Naive thymus-derived CD4-positive, alpha-beta T cell (primary cell): ENCODE measurements at regions of chr3 and their contacts with region 1.

Region 1: GRCh38 chr3:99817437-99818240 is at the start of gene CMSS1:
- DNase-seq: peak; percentile 96 to 98 (median 97)
- ATAC-seq: peak; percentile 94
- H3K4me3 ChIP-seq: peak within 1 kb of the TSS; percentile 80
- H3K4me3 Mint-ChIP-seq: peak within 1 kb of the TSS; percentile 84 to 99 (median 95)
- H3K27ac ChIP-seq: peak within 1 kb of the TSS; percentile 90
- H3K27ac Mint-ChIP-seq: peak within 1 kb of the TSS; percentile 93 to 100 (median 100)
- H3K4me1 ChIP-seq: peaks cover 18 to 22% of the 10 kb centered on the region in 2 donors
- H3K4me1 Mint-ChIP-seq: peaks cover 19 to 62% (median 41%) of the 10 kb centered on the region in 7 donors
- H3K27me3 ChIP-seq: no peaks in the 10 kb centered on the region
- H3K27me3 Mint-ChIP-seq: no peaks in the 10 kb centered on the region
- total RNA-seq, gene CMSS1: 14.9 to 47.7 (median 18.2) TPM

Region 2: GRCh38 chr3:98692787-98693473 is 1124.7 kb before region 1 on chr3:
- CTCF ChIA-PET with region 1: no interaction called
- POLR2A ChIA-PET with region 1: no interaction called
- intact Hi-C with region 1: no loop called
- DNase-seq: no peak
- ATAC-seq: peak; percentile 65
- H3K4me3 ChIP-seq: no peak overlapping the region
- H3K4me3 Mint-ChIP-seq: no peak overlapping the region
- H3K27ac ChIP-seq: no peak overlapping the region
- H3K27ac Mint-ChIP-seq: no peak overlapping the region
- H3K4me1 ChIP-seq: no peaks in the 10 kb centered on the region
- H3K4me1 Mint-ChIP-seq: no peaks in the 10 kb centered on the region
- H3K27me3 ChIP-seq: no peaks in the 10 kb centered on the region
- H3K27me3 Mint-ChIP-seq: peaks cover 0 to 5% (median 0%) of the 10 kb centered on the region in 5 donors

Region 3: DNA sequence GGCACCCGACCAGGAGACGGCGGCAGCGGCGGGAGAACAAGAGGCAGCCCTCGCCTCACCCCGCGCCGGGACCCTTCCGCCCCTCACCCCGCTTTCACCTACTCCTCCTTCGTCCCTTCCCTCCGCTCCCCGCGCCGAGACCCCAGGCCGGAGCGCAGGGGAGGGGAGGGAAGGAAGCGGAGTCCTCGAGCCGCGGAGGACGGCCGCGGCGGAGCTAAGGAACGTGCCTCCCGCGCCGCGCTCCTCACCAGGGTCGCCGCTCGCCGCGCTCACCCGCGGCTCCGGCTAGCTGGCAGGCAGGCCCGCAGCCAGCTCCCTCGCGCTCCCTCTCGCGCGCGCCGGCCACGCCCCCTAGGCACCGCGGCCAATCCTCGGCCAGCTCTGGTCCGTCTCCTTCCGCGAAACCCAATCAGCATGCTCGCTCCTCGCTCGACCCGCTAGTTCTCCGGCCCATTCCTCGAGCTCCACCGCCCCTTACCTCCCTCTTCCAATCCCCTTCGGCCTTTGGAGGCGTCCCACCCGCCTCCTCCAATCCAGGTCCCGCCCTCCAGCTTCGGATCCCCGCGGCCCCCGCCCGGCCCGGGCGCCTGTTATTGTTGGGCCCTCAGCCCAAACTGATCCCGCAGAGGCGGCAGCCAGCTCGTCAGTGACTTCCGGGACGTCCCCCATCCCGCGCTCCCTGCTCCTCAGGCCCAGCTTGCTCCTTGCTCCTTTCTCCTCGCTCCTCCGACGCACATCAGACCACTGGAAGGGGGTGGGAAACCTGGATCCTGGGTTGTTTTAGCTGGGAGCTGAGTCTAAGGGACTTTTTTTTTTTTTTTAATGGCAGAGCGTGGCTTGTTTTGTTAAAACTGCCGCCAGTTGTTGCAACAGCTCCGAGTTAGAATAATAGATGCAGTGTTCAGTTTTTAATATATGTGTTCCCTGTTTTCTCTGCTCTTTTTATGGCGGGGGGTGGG is 916.0 kb before region 1 on chr3 and contains the start of gene DCBLD2:
- CTCF ChIA-PET with region 1: no interaction called
- POLR2A ChIA-PET with region 1: interaction called, 3 read pairs
- intact Hi-C with region 1: loop called (anchors 1 to 5 kb)
- DNase-seq: peak; percentile 90 to 96 (median 94)
- ATAC-seq: peak; percentile 99
- H3K4me3 ChIP-seq: peak within 1 kb of the TSS; percentile 86
- H3K4me3 Mint-ChIP-seq: peak within 1 kb of the TSS; percentile 89 to 97 (median 94)
- H3K27ac ChIP-seq: peak within 1 kb of the TSS; percentile 78
- H3K27ac Mint-ChIP-seq: peak within 1 kb of the TSS; percentile 44 to 96 (median 86)
- H3K4me1 ChIP-seq: peaks cover 5% of the 10 kb centered on the region in 2 donors
- H3K4me1 Mint-ChIP-seq: peaks cover 14 to 27% (median 22%) of the 10 kb centered on the region in 7 donors
- H3K27me3 ChIP-seq: no peaks in the 10 kb centered on the region
- H3K27me3 Mint-ChIP-seq: peaks cover 0 to 30% (median 8%) of the 10 kb centered on the region in 5 donors
- total RNA-seq, gene DCBLD2: 1.9 to 4.7 (median 2.9) TPM

Region 4: GRCh38 chr3:99833617-99834205 is 16.1 kb after region 1 on chr3:
- CTCF ChIA-PET with region 1: interaction called, 4 read pairs
- POLR2A ChIA-PET with region 1: no interaction called
- intact Hi-C with region 1: loop called in 1 of 2 experiments (anchors 1 kb)
- DNase-seq: no peak
- ATAC-seq: no peak
- H3K4me3 ChIP-seq: no peak overlapping the region
- H3K4me3 Mint-ChIP-seq: no peak overlapping the region
- H3K27ac ChIP-seq: no peak overlapping the region
- H3K27ac Mint-ChIP-seq: no peak overlapping the region
- H3K4me1 ChIP-seq: no peaks in the 10 kb centered on the region
- H3K4me1 Mint-ChIP-seq: peaks cover 0 to 11% (median 4%) of the 10 kb centered on the region in 7 donors
- H3K27me3 ChIP-seq: no peaks in the 10 kb centered on the region
- H3K27me3 Mint-ChIP-seq: no peaks in the 10 kb centered on the region

Region 5: DNA sequence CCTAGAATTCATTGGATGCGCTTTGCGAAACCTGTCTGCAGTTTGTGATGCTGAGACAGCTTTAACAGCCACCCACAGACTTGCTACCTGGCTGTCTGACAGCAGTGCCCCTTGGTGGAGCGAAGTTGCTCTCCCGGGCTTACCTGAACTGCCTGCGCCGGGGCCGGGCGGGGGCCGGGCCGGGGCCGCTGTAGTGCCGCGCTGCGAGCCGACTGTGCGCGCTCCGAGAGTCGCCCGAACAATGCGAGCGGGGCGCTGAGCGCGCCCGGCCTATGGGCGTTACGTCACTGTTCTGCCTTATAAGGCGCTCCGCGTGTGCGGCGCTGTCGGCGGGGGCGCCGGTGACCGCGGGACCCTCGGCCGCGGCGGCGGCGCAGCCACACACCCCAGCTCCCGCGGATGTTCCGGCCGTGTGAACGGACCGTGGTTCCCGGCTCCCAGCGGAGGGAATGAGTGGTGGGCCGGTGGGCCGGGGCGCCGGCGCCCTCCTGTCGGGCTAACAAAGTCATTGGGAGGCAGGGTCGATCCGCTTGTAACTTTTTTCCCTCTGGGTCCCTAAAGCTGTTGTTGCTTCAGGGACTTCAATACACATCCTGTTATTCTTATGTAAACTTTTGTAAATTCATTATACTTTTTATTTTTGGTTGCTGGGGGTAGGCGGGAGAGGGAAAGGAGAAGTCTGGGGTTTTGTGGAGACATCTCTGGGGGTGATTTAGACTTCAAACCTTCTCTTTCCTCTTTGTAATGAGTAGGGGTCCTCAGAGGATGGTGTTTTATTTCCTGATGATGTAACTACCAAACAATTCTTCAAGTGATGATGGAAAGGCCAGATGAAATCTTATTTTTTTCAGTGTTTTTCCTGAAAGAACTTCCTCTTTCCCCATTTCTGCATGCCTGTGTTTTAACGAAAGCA is 58.5 kb after region 1 on chr3:
- CTCF ChIA-PET with region 1: no interaction called
- POLR2A ChIA-PET with region 1: no interaction called
- intact Hi-C with region 1: loop called in 1 of 2 experiments (anchors 1 kb)
- DNase-seq: peak; percentile 60 to 74 (median 67)
- ATAC-seq: peak; percentile 97
- H3K4me3 ChIP-seq: peak overlapping the region; percentile 56
- H3K4me3 Mint-ChIP-seq: peak overlapping the region; percentile 76 to 87 (median 82)
- H3K27ac ChIP-seq: peak overlapping the region; percentile 59
- H3K27ac Mint-ChIP-seq: peak overlapping the region in 8 of 9 donors; percentile 30 to 86 (median 60)
- H3K4me1 ChIP-seq: peaks cover 10 to 14% of the 10 kb centered on the region in 2 donors
- H3K4me1 Mint-ChIP-seq: peaks cover 3 to 41% (median 17%) of the 10 kb centered on the region in 7 donors
- H3K27me3 ChIP-seq: peaks cover 0 to 6% of the 10 kb centered on the region in 2 donors
- H3K27me3 Mint-ChIP-seq: peaks cover 0 to 48% (median 0%) of the 10 kb centered on the region in 5 donors

Region 6: GRCh38 chr3:100210772-100211135 is 393.1 kb after region 1 on chr3:
- CTCF ChIA-PET with region 1: no interaction called
- POLR2A ChIA-PET with region 1: no interaction called
- intact Hi-C with region 1: loop called in 1 of 2 experiments (anchors 1 kb)
- DNase-seq: peak in 4 of 9 donors; percentile 1 to 25 (median 11)
- ATAC-seq: peak; percentile 54
- H3K4me3 ChIP-seq: no peak overlapping the region
- H3K4me3 Mint-ChIP-seq: peak overlapping the region in 6 of 10 donors; percentile 45 to 75 (median 64)
- H3K27ac ChIP-seq: no peak overlapping the region
- H3K27ac Mint-ChIP-seq: peak overlapping the region in 6 of 9 donors; percentile 41 to 92 (median 86)
- H3K4me1 ChIP-seq: peaks cover 10 to 12% of the 10 kb centered on the region in 2 donors
- H3K4me1 Mint-ChIP-seq: peaks cover 10 to 32% (median 16%) of the 10 kb centered on the region in 7 donors
- H3K27me3 ChIP-seq: no peaks in the 10 kb centered on the region
- H3K27me3 Mint-ChIP-seq: peaks cover 0 to 5% (median 0%) of the 10 kb centered on the region in 5 donors

Region 7: DNA sequence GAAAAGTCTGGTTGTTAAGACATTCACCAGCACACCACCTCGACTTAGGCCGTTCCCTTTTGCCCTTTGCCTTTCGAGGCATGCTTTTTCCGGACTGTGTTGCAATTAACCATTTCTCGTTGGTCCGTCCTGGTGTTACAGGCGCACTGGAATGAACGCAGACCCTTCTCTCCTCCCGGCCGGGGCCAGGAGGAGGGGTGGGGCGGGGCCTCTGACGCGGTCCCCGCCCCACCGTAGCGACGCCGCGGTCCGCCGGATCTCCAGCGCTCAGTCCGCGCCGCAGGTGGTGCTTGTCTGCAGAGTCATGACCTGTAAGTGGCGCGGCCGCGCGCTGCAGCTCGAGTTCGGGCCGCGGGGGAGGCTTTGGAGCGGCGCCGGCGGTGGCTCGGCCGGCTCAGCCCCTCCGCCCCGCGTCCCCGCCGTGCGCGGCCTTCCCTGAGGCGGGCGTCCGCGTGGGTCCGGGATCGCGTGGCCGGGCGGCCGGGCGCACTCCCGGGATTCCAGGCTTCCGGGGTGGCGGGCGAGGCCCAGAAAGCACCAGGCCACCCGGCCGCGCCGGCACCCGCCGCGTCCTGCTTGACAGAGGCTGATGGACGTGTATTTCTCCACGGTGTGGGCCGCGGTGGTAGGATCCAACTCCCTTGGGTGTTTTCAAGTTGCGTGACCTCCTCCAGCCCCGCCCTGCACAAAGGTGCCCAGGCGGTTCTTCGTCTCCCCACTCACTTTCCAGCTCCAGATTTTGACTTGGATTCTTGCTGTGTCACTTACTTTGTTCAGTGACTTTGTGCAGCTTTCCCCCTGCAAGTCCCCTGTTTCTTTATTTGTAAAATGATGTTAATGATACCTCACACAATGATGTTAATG is 517.1 kb after region 1 on chr3 and contains the start of gene NIT2:
- CTCF ChIA-PET with region 1: no interaction called
- POLR2A ChIA-PET with region 1: no interaction called
- intact Hi-C with region 1: loop called in 1 of 2 experiments (anchors 2 kb)
- DNase-seq: peak; percentile 49 to 79 (median 65)
- ATAC-seq: peak; percentile 97
- H3K4me3 ChIP-seq: peak within 1 kb of the TSS; percentile 72
- H3K4me3 Mint-ChIP-seq: peak within 1 kb of the TSS; percentile 86 to 99 (median 94)
- H3K27ac ChIP-seq: peak within 1 kb of the TSS; percentile 76
- H3K27ac Mint-ChIP-seq: peak within 1 kb of the TSS; percentile 87 to 97 (median 93)
- H3K4me1 ChIP-seq: peaks cover 8 to 12% of the 10 kb centered on the region in 2 donors
- H3K4me1 Mint-ChIP-seq: peaks cover 11 to 40% (median 30%) of the 10 kb centered on the region in 7 donors
- H3K27me3 ChIP-seq: no peaks in the 10 kb centered on the region
- H3K27me3 Mint-ChIP-seq: no peaks in the 10 kb centered on the region
- total RNA-seq, gene NIT2: 25.3 to 51.6 (median 30.6) TPM